ENCODE measurements at regions of chr13 and their contacts with region 1.

Region 1: DNA sequence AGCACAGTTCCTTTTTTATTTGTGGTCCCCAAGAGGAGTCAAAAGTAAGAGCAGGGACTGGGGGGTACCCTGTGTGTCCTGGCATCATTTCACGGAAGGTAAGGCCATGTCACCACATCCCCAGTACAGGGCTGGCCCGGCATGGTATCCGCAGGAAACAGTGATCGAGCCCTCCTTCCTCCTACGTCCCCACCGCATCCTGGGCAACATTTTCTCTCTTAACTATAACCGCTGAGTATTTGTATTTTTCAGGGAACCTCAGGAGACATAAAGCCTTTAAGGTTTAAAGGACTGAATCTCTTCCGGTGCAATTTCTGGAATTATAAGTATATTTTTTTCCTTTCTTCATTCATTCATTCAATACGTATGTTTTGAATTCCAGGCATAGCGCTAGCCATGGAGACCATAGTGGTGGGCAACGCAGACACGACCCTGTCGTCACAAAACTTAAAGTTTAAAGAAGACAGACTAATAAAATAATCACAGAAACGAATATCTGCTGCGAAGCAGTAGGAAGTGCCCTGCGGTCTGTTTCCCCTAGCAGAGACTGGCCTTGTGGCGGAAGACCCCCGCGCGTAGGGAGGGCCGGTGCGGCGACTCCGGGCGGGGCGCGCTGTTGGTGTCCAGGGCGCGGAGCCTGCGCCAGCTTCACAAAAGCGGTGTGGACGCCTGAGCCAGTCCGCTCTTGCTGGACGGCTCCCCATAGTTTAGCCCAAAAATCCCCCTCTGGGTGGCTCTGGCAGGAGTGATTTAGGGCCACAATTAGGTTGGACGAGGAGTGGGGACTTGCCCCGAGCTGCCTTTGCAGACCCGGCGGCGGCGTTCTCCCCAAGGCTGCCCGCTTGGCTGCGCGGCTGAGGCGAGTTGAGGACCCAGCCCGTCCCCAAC is 13.9 kb upstream of the LATS2 start:
- DNase-seq: no peak
- H3K4me3 ChIP-seq: peak overlapping the region; percentile 58 to 63
- H3K27ac ChIP-seq: peak overlapping the region; percentile 82
- H3K4me1 ChIP-seq: peaks cover 40% of the 10 kb centered on the region
- H3K27me3 ChIP-seq: no peaks in the 10 kb centered on the region
- CTCF ChIP-seq: no peak
- POLR2A ChIP-seq: no peak

Region 2: DNA sequence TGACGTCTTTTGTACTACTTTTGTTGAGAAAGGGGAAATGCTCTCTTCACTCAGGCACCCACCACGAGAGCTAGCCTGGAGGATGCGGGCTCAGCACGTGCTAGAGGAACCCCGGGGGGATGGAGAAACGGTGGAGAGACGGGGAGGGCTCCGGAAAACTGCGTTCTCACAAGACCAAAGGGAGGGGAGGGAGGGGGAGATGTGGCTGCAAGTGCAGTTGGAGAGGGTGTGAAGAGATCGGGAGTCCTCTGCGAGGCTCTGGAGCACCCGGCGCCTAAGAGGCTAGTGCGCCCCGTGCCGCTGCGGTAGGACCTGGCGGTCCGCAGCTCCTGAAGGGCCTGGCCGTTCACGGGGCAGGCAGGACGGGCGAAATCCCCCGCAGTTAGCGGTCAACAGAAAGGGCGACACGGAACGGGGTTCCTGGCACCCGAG is 129.3 kb before region 1 on chr13:
- intact Hi-C with region 1: loop called (anchors 10 kb)
- DNase-seq: no peak
- H3K4me3 ChIP-seq: peak overlapping the region; percentile 5
- H3K27ac ChIP-seq: no peak overlapping the region
- H3K4me1 ChIP-seq: peaks cover 6% of the 10 kb centered on the region
- H3K27me3 ChIP-seq: no peaks in the 10 kb centered on the region
- CTCF ChIP-seq: no peak
- POLR2A ChIP-seq: no peak

Region 3: GRCh38 chr13:21095311-21095710 is 20.1 kb after region 1 on chr13:
- intact Hi-C with region 1: no loop called
- DNase-seq: no peak
- H3K4me3 ChIP-seq: no peak overlapping the region
- H3K27ac ChIP-seq: no peak overlapping the region
- H3K4me1 ChIP-seq: no peaks in the 10 kb centered on the region
- H3K27me3 ChIP-seq: no peaks in the 10 kb centered on the region
- CTCF ChIP-seq: no peak
- POLR2A ChIP-seq: no peak

Measured in vagina (tissue), 2 donors.